PC-3 (cell line): ENCODE measurements at regions of chr4 and their contacts with region 1.

Region 1: GRCh38 chr4:77203380-77204197 is 46.6 kb downstream of the CCNG2 start:
- DNase-seq: peak; percentile 79
- ATAC-seq: peak; percentile 42
- H3K4me3 ChIP-seq: no peak overlapping the region
- H3K27ac ChIP-seq: peak overlapping the region; percentile 98
- H3K4me1 ChIP-seq: peaks cover 32% of the 10 kb centered on the region
- H3K27me3 ChIP-seq: no peaks in the 10 kb centered on the region
- CTCF ChIP-seq: peak; percentile 80

Region 2: DNA sequence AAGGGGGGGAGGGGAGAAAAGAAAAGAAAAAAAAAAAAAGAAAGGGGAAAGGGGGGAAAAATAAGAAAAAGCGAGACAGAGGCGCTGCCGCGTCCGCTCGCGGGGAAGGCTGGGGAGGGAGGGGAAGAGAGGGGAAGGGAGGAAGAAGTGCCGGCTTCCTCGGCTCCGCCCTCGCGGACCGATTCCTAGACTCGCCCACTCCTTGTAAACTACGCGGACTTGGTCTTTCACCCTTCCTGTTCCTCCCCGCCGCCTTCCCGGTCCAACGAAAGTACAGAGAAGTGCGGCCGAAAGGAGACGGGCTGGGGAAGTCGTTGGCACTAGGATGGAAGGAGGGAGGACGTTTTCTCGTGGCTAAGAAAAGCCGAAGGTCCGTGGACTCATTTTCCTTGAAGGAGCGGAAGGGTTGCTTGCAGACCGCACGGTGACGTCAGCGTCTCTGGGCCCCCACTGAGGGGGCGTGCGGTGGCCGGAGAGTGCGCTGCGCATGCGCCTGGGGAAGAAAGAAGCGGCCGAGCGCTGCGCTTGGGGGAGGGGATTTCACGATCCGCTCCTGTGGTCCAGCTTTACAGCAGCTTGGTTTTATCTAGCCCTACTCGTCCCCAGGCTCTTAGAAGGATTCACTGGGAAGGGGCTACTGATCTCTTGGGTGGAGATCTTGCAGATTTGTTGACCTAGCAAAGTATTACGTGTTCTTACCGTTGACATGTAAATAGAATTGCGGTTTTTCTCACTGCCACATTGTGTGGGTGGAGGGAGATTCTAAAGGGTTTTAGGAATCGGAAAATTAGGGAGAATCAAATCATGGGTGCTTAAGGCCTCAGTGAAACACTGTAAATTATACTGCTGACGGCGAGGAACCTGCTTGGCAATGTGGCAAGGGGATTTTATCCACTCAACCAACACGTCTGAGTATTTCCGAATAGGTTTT is 127.5 kb before region 1 on chr4 and contains the start of gene CCNI:
- CTCF ChIA-PET with region 1: interaction called, 3 read pairs
- POLR2A ChIA-PET with region 1: interaction called, 3 read pairs
- intact Hi-C with region 1: loop called (anchors 1 kb)
- DNase-seq: peak; percentile 91
- ATAC-seq: peak; percentile 62
- H3K4me3 ChIP-seq: peak within 1 kb of the TSS; percentile 94
- H3K27ac ChIP-seq: peak within 1 kb of the TSS; percentile 96
- H3K4me1 ChIP-seq: peaks cover 25% of the 10 kb centered on the region
- H3K27me3 ChIP-seq: no peaks in the 10 kb centered on the region
- CTCF ChIP-seq: no peak
- total RNA-seq, gene CCNI: 60.1 and 73.5 TPM in 2 replicates

Region 3: GRCh38 chr4:77095101-77095821 is 108.3 kb before region 1 on chr4:
- CTCF ChIA-PET with region 1: interaction called, 6 read pairs
- POLR2A ChIA-PET with region 1: no interaction called
- intact Hi-C with region 1: loop called (anchors 1 kb)
- DNase-seq: peak; percentile 62
- ATAC-seq: peak; percentile 94
- H3K4me3 ChIP-seq: no peak overlapping the region
- H3K27ac ChIP-seq: no peak overlapping the region
- H3K4me1 ChIP-seq: peaks cover 15% of the 10 kb centered on the region
- H3K27me3 ChIP-seq: no peaks in the 10 kb centered on the region
- CTCF ChIP-seq: peak; percentile 81

Region 4: DNA sequence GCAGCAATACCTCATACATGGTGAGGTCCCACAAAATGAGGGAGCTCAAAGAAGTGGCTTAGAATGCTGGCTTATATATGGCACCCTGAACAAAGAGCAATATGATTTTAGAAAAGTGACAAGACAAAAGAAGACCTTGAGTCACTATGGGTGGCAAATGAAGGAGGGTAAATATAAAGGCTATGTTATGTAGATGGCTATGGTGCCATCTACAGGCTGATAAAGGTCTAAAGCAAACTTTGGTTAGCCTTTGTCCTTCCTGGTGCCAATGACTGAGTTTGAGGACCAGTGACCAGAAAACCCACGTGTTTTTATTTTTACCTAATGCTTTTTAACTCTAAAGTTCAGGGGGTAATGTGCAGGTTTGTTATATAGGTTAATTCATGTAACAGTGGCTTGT is 105.3 kb after region 1 on chr4:
- CTCF ChIA-PET with region 1: no interaction called
- POLR2A ChIA-PET with region 1: no interaction called
- intact Hi-C with region 1: no loop called
- DNase-seq: peak; percentile 67
- ATAC-seq: peak; percentile 83
- H3K4me3 ChIP-seq: no peak overlapping the region
- H3K27ac ChIP-seq: no peak overlapping the region
- H3K4me1 ChIP-seq: peaks cover 5% of the 10 kb centered on the region; the same call in 1 of the 2 replicates
- H3K27me3 ChIP-seq: peaks cover 6% of the 10 kb centered on the region; the same call in 1 of the 2 replicates
- CTCF ChIP-seq: peak; percentile 64